ENCODE measurements at regions of chr1 and their contacts with region 1.

Region 1: DNA sequence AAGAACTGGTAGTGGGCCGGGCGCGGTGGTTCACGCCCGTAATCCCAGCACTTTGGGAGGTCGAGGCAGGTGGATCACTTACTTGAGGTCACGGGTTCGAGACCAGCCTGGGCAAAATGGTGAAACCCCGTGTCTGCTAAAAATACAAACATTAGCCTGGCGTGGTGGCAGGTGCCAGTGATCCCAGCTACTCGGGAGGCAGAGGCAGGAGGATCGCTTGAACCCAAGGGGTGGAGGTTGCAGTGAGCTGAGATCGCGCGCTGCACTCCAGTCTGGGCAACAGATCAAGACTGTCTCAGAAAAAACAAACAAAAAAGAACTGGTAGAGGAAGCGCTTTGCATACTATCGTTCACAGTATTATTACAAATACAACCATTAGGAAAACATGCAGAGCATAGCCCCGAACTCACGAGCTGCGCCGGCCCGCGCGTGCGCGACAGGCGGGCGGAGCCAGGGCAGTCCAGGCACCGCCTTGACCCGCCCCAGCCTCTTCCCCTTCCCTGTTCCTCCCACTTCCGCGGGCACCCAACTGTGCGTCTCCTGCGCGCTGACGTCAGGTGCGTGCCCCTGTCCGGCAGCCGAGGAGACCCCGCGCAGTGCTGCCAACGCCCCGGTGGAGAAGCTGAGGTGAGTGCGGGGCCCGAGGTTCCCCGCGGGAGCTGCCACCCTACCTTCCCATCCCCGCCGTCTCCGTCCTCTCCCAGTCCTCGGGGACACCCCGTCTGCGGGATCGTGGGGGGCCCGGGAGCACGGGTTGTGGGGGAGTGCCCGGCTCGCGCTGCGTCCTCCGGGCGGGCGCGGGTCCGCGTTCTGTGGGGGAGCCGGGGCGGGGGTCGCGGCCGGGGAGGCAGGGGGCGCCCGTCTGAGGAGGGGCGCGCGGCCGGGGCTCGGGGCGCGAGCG is at the start of gene CDC42:
- DNase-seq: peak; percentile 97 to 98
- H3K4me3 ChIP-seq: peak within 1 kb of the TSS; percentile 69
- H3K4me3 Mint-ChIP-seq: peak within 1 kb of the TSS; percentile 98
- H3K27ac Mint-ChIP-seq: peak within 1 kb of the TSS; percentile 99
- H3K4me1 ChIP-seq: peaks cover 11% of the 10 kb centered on the region; the same call in 1 of the 2 replicates
- H3K4me1 Mint-ChIP-seq: peaks cover 14% of the 10 kb centered on the region
- H3K27me3 ChIP-seq: no peaks in the 10 kb centered on the region
- H3K27me3 Mint-ChIP-seq: no peaks in the 10 kb centered on the region
- CTCF ChIP-seq: no peak
- total RNA-seq, gene CDC42: 240 and 251 TPM in 2 replicates

Region 2: GRCh38 chr1:21154717-21155116 is 897.6 kb before region 1 on chr1:
- CTCF ChIA-PET with region 1: no interaction called
- POLR2A ChIA-PET with region 1: no interaction called
- intact Hi-C with region 1: no loop called
- DNase-seq: no peak
- H3K4me3 ChIP-seq: no peak overlapping the region
- H3K4me3 Mint-ChIP-seq: no peak overlapping the region
- H3K27ac Mint-ChIP-seq: no peak overlapping the region
- H3K4me1 ChIP-seq: peaks cover 7% of the 10 kb centered on the region; the same call in 1 of the 2 replicates
- H3K4me1 Mint-ChIP-seq: peaks cover 6% of the 10 kb centered on the region
- H3K27me3 ChIP-seq: no peaks in the 10 kb centered on the region
- H3K27me3 Mint-ChIP-seq: no peaks in the 10 kb centered on the region
- CTCF ChIP-seq: no peak

Region 3: GRCh38 chr1:22025368-22026155 is 26.8 kb before region 1 on chr1:
- CTCF ChIA-PET with region 1: interaction called, 10 read pairs
- POLR2A ChIA-PET with region 1: interaction called, 19 read pairs
- intact Hi-C with region 1: loop called (anchors 1 kb)
- DNase-seq: peak; percentile 86 to 92
- H3K4me3 ChIP-seq: peak overlapping the region; percentile 85
- H3K4me3 Mint-ChIP-seq: peak overlapping the region; percentile 84
- H3K27ac Mint-ChIP-seq: peak overlapping the region; percentile 80
- H3K4me1 ChIP-seq: peaks cover 23% of the 10 kb centered on the region
- H3K4me1 Mint-ChIP-seq: peaks cover 20% of the 10 kb centered on the region
- H3K27me3 ChIP-seq: no peaks in the 10 kb centered on the region
- H3K27me3 Mint-ChIP-seq: no peaks in the 10 kb centered on the region
- CTCF ChIP-seq: no peak

Region 4: DNA sequence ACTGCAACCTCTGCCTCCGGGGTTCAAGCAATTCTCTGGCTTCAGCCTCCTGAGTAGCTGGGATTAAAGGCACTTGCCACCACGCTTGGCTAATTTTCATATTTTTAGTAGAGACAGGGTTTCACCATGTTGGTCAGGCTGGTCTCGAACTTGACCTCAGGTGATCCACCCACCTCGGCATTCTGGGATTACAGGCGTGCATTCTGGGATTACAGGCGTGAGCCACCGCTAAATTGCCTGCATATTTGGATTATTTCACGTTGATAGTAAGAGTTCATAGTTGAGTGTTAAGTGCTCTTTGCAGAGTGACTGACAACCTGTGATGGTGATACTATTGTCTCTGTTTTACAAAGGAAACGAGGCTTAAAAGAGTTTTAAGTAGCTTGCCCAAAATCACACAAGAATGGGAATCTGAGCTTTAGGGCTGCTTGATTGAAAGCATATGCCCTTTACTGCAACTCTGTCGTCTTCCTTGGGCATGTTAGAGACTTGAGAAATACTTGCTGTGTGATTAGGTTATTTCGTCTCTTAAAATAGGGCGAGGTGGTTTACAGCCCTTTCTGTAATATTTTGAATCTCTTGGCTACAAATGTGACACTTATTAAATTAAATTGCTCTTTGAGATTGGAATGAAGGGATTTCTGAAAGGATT is 12.5 kb after region 1 on chr1:
- CTCF ChIA-PET with region 1: no interaction called
- POLR2A ChIA-PET with region 1: interaction called, 10 read pairs
- intact Hi-C with region 1: no loop called
- DNase-seq: no peak
- H3K4me3 ChIP-seq: no peak overlapping the region
- H3K4me3 Mint-ChIP-seq: no peak overlapping the region
- H3K27ac Mint-ChIP-seq: no peak overlapping the region
- H3K4me1 ChIP-seq: no peaks in the 10 kb centered on the region
- H3K4me1 Mint-ChIP-seq: peaks cover 41% of the 10 kb centered on the region
- H3K27me3 ChIP-seq: no peaks in the 10 kb centered on the region
- H3K27me3 Mint-ChIP-seq: no peaks in the 10 kb centered on the region
- CTCF ChIP-seq: no peak

Measured in Caco-2 (cell line).